ENCODE measurements at regions of chr10 and their contacts with region 1.

Region 1: GRCh38 chr10:70461215-70461986 is 17.2 kb upstream of the PALD1 start:
- DNase-seq: peak; percentile 44
- ATAC-seq: peak; percentile 75
- H3K4me3 Mint-ChIP-seq: no peak overlapping the region
- H3K27ac Mint-ChIP-seq: no peak overlapping the region
- H3K4me1 Mint-ChIP-seq: peaks cover 19% of the 10 kb centered on the region
- H3K27me3 Mint-ChIP-seq: peaks cover 26% of the 10 kb centered on the region
- CTCF ChIP-seq: peak; percentile 70

Region 2: DNA sequence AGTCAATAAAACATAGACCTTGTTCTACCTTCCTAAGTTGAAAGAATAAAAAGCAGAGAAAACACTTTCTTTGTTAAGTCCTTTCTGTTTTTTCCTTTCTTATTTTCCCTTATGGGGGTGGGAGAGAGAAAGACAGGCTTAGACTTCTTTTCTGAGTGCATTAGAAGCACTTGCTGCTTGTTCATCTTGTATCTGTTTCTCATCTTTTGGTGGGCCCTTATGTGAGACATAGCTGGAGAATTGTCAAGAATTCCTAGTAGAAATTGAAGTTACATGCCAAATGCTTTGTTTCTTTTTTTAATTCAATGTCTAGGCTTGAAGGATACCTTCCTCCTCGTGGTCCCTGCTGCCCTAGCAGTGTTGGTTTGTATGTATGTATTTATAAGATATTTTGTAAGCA is 50.8 kb before region 1 on chr10:
- CTCF ChIA-PET with region 1: no interaction called
- POLR2A ChIA-PET with region 1: no interaction called
- intact Hi-C with region 1: no loop called
- DNase-seq: no peak
- ATAC-seq: no peak
- H3K4me3 Mint-ChIP-seq: no peak overlapping the region
- H3K27ac Mint-ChIP-seq: no peak overlapping the region
- H3K4me1 Mint-ChIP-seq: peaks cover 43% of the 10 kb centered on the region
- H3K27me3 Mint-ChIP-seq: no peaks in the 10 kb centered on the region
- CTCF ChIP-seq: no peak

Region 3: GRCh38 chr10:70478191-70479164 is 17.1 kb after region 1 on chr10 and contains the start of gene PALD1:
- CTCF ChIA-PET with region 1: interaction called, 10 read pairs
- POLR2A ChIA-PET with region 1: no interaction called
- intact Hi-C with region 1: no loop called
- DNase-seq: peak; percentile 41
- ATAC-seq: peak; percentile 29
- H3K4me3 Mint-ChIP-seq: peak within 1 kb of the TSS; percentile 81
- H3K27ac Mint-ChIP-seq: peak within 1 kb of the TSS; percentile 68
- H3K4me1 Mint-ChIP-seq: peaks cover 51% of the 10 kb centered on the region
- H3K27me3 Mint-ChIP-seq: no peaks in the 10 kb centered on the region
- CTCF ChIP-seq: no peak
- total RNA-seq, gene PALD1: 2.4 and 3.3 TPM in 2 replicates

Region 4: DNA sequence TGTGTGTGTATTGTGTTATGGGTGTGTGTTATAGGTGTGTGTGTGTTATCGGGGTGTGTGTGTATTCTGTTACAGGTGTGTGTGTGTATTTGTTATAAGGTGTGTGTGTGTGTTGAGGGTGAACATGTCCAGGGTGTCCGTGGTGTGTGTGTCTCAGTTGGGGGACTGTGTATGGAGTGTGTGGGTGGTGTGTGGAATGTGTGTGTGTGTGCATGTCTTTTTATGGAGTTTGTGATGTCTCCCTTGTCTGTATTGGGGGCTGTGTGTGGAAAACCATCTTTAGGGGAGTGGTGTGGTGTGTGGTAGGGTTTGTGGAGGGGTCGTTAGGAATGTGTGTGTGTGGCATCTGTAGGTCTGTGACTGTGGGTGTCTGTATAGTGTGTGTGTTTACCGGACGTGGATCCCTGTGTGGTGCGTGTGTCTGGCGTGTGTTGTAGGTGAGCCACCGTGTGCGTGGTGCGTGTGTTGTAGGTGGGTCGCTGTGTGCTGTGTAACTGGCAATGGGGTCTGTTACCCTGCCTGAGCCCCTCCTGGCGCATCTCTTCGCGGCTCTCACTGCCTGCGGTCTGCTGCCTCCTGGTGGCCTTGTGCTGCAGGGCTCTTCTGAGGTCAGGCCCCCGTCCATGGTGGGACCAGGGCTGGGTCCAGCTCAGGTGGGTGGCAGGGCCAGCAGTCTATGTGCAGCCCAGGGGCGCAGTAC is 78.8 kb after region 1 on chr10:
- CTCF ChIA-PET with region 1: interaction called, 87 read pairs
- POLR2A ChIA-PET with region 1: no interaction called
- intact Hi-C with region 1: loop called (anchors 1 kb)
- DNase-seq: peak; percentile 33
- ATAC-seq: peak; percentile 47
- H3K4me3 Mint-ChIP-seq: no peak overlapping the region
- H3K27ac Mint-ChIP-seq: no peak overlapping the region
- H3K4me1 Mint-ChIP-seq: no peaks in the 10 kb centered on the region
- H3K27me3 Mint-ChIP-seq: no peaks in the 10 kb centered on the region
- CTCF ChIP-seq: no peak

Region 5: GRCh38 chr10:70564901-70565351 is 103.5 kb after region 1 on chr10:
- CTCF ChIA-PET with region 1: interaction called, 3 read pairs
- POLR2A ChIA-PET with region 1: no interaction called
- intact Hi-C with region 1: loop called (anchors 1 kb)
- DNase-seq: no peak
- ATAC-seq: no peak
- H3K4me3 Mint-ChIP-seq: no peak overlapping the region
- H3K27ac Mint-ChIP-seq: no peak overlapping the region
- H3K4me1 Mint-ChIP-seq: peaks cover 8% of the 10 kb centered on the region
- H3K27me3 Mint-ChIP-seq: no peaks in the 10 kb centered on the region
- CTCF ChIP-seq: no peak

Region 6: GRCh38 chr10:70880077-70880534 is 418.7 kb after region 1 on chr10:
- CTCF ChIA-PET with region 1: interaction called, 3 read pairs
- POLR2A ChIA-PET with region 1: no interaction called
- intact Hi-C with region 1: loop called (anchors 1 kb)
- DNase-seq: peak; percentile 40
- ATAC-seq: peak; percentile 96
- H3K4me3 Mint-ChIP-seq: no peak overlapping the region
- H3K27ac Mint-ChIP-seq: peak overlapping the region; percentile 25
- H3K4me1 Mint-ChIP-seq: peaks cover 4% of the 10 kb centered on the region
- H3K27me3 Mint-ChIP-seq: no peaks in the 10 kb centered on the region
- CTCF ChIP-seq: peak; percentile 84